K562 (cell line): ENCODE measurements at regions of chr17 and their contacts with region 1.

Region 1: DNA sequence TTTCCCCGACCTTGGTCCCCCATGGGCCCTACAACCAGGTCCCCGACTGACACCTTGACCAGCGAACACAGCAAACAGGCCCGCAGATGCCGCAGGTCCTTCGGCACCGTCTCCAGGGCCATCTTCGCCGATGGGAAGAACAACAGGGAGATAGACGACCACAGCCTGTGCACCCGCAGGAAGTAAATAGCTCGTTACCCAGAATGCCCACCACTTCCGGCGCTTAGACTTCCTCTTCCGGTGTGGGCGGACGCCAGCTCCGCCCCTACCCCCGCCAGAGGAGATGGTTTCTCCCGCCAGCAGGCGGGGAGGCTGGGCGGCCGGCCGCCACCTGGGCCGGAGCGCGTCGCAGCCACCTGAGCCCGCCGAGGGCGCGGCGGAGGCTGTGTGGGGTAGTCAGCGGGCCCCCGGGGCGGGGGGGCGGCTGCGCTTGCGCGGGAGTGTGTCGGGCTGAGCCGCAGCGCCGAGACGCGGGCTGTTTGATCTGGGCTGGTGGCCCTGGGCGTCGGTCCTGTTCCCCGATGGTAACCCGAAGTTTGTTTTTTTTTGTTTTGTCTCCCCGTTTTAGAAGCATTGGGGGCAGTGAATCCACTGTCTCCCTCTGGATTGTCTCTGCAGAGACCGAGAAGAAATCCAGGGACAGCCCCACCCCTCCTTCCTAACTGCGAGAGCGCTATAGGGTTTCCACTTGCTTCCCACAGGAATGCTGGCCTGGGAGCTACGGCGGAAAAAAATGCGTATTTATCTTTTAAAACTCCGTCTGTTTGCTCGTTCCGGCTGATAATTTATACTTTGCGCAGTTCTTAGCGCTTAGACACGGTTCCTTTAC is at the start of gene SUPT4H1:
- DNase-seq: peak; percentile 95 to 97 (median 96)
- ATAC-seq: peak; percentile 97
- H3K4me3 ChIP-seq: peak within 1 kb of the TSS; percentile 99
- H3K27ac ChIP-seq: peak within 1 kb of the TSS; percentile 93
- H3K4me1 ChIP-seq: peaks cover 15 to 20% of the 10 kb centered on the region in 2 experiments; a peak in 4 of 5 replicates
- H3K27me3 ChIP-seq: no peaks in the 10 kb centered on the region
- CTCF ChIP-seq: peak in 2 of 3 experiments; percentile 15 to 20; a peak in 2 of 6 replicates
- EP300 ChIP-seq: peak; percentile 64; the same call in 1 of the 2 replicates
- POLR2A ChIP-seq: peak; percentile 89
- RAD21 ChIP-seq: peak; percentile 38 to 49; a peak in 3 of 4 replicates
- polyA plus RNA-seq, gene SUPT4H1: 235 to 320 TPM

Region 2: GRCh38 chr17:58337600-58338453 is 14.4 kb before region 1 on chr17:
- CTCF ChIA-PET with region 1: no interaction called
- POLR2A ChIA-PET with region 1: interaction called, 257 read pairs
- in situ Hi-C with region 1: no loop called
- intact Hi-C with region 1: no loop called
- DNase-seq: peak; percentile 58 to 96 (median 75)
- ATAC-seq: peak; percentile 80
- H3K4me3 ChIP-seq: peak overlapping the region; percentile 91
- H3K27ac ChIP-seq: peak overlapping the region; percentile 99
- H3K4me1 ChIP-seq: peaks cover 62 to 71% of the 10 kb centered on the region in 2 experiments
- H3K27me3 ChIP-seq: no peaks in the 10 kb centered on the region
- CTCF ChIP-seq: 0 out of 6 replicates have a peak, but pooled peaks of 1 of the 3 experiments have one; percentile 12
- EP300 ChIP-seq: peak; percentile 74
- POLR2A ChIP-seq: peak; percentile 90
- RAD21 ChIP-seq: peak; percentile 3 to 6; a peak in 3 of 4 replicates

Region 3: DNA sequence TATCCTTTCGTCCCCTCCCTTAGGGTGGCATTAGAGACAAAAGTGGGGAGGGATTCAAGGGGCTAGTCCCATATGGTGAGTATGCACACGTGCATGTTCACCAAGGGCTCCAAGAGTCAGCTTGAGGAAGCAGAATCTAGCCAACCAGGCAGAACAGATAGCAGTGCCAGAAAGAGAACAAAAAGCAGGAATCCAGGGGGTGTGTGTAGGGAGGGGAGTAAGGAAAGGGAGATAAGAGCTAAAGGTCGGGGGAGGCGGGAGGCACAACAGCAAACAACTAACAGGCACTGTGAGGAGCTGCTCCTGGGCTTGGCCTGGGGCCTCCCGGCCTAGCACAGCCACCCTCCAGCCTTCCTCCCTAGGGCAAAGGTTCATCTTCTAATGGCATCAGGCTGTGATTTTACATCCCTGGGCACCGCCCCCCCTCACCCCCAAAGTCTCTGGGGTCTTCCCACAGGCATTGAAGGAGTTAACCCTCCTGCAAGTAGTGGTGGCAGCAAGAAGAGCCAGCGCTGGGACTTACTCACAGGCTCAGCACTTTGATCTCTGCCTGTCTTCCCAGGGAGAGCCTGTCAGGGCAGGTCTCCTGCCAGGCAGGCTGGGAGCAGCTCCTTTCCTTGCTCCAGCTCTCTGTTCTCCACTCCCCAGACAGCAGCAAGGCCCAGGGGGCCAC is 12.2 kb after region 1 on chr17:
- CTCF ChIA-PET with region 1: no interaction called
- POLR2A ChIA-PET with region 1: interaction called, 36 read pairs
- in situ Hi-C with region 1: no loop called
- intact Hi-C with region 1: no loop called
- DNase-seq: peak; percentile 87 to 90 (median 88)
- ATAC-seq: peak; percentile 92
- H3K4me3 ChIP-seq: no peak overlapping the region
- H3K27ac ChIP-seq: peak overlapping the region; percentile 63
- H3K4me1 ChIP-seq: peaks cover 42 to 47% of the 10 kb centered on the region in 2 experiments
- H3K27me3 ChIP-seq: no peaks in the 10 kb centered on the region
- CTCF ChIP-seq: no peak
- EP300 ChIP-seq: peak; percentile 75; the same call in 1 of the 2 replicates
- POLR2A ChIP-seq: no peak; the same call in 1 of the 2 replicates
- RAD21 ChIP-seq: no peak

Region 4: GRCh38 chr17:58377093-58377601 is 24.9 kb after region 1 on chr17:
- CTCF ChIA-PET with region 1: no interaction called
- POLR2A ChIA-PET with region 1: interaction called, 17 read pairs
- in situ Hi-C with region 1: no loop called
- intact Hi-C with region 1: no loop called
- DNase-seq: no peak
- ATAC-seq: no peak
- H3K4me3 ChIP-seq: no peak overlapping the region
- H3K27ac ChIP-seq: no peak overlapping the region
- H3K4me1 ChIP-seq: peaks cover 0 to 26% of the 10 kb centered on the region in 2 experiments; a peak in 4 of 5 replicates
- H3K27me3 ChIP-seq: no peaks in the 10 kb centered on the region
- CTCF ChIP-seq: no peak
- EP300 ChIP-seq: no peak
- POLR2A ChIP-seq: no peak
- RAD21 ChIP-seq: no peak

Region 5: GRCh38 chr17:58417300-58418092 is 65.3 kb after region 1 on chr17 and contains the start of gene RNF43:
- CTCF ChIA-PET with region 1: no interaction called
- POLR2A ChIA-PET with region 1: interaction called, 18 read pairs
- in situ Hi-C with region 1: no loop called
- intact Hi-C with region 1: loop called (anchors 1 kb)
- DNase-seq: peak; percentile 92 to 97 (median 94)
- ATAC-seq: peak; percentile 97
- H3K4me3 ChIP-seq: peak within 1 kb of the TSS; percentile 22
- H3K27ac ChIP-seq: peak within 1 kb of the TSS; percentile 37
- H3K4me1 ChIP-seq: peaks cover 3 to 8% of the 10 kb centered on the region in 2 experiments; a peak in 4 of 5 replicates
- H3K27me3 ChIP-seq: no peaks in the 10 kb centered on the region
- CTCF ChIP-seq: peak; percentile 90 to 93 (median 91)
- EP300 ChIP-seq: peak; percentile 50; the same call in 1 of the 2 replicates
- POLR2A ChIP-seq: peak; percentile 58
- RAD21 ChIP-seq: peak; percentile 93 to 96
- polyA plus RNA-seq, gene RNF43: 0.29 to 0.51 TPM

Region 6: DNA sequence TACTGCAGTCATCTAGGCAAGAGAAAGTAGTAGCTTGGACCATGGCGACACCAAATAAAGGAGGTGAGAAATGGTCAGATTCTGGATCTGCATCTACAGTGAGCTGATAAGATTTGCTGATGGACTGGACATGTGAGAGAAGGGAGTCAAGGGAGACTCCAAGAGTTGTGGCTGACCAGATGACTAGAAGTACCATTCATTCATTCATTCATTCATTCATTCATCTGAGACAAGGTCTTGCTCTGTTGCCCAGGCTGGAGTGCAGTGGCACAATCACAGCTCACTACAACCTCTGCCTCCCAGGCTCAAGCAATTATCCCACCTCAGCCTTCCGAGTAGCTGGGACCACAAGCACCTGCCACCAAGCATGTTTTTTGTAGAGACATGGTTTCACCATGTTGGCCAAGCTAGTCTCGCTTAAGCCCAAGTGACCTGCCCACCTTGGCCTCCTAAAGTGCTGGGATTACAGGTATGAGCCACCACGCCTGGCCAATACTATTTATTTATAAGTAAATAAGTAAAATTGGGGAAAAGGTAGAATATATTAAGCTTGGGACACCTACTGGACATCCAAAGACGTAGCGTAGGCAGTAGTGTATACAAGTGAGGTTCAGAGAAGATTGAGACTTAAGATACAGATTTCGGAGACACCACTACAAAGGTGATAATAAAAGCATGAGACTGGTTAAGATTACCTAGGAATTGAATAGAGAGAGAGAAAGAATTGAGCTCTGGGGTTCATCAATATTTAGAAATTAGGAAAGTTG is 80.8 kb after region 1 on chr17:
- CTCF ChIA-PET with region 1: no interaction called
- POLR2A ChIA-PET with region 1: no interaction called
- in situ Hi-C with region 1: no loop called
- intact Hi-C with region 1: loop called (anchors 5 kb)
- DNase-seq: no peak
- ATAC-seq: peak; percentile 36; the same call in 1 of the 3 replicates
- H3K4me3 ChIP-seq: no peak overlapping the region
- H3K27ac ChIP-seq: no peak overlapping the region
- H3K4me1 ChIP-seq: peaks cover 7 to 19% of the 10 kb centered on the region in 2 experiments; a peak in 4 of 5 replicates
- H3K27me3 ChIP-seq: no peaks in the 10 kb centered on the region
- CTCF ChIP-seq: peak in 2 of 3 experiments; percentile 10 to 30; a peak in 2 of 6 replicates
- EP300 ChIP-seq: no peak
- POLR2A ChIP-seq: no peak
- RAD21 ChIP-seq: no peak